ENCODE measurements at regions of chr6 and their contacts with region 1.

Region 1: DNA sequence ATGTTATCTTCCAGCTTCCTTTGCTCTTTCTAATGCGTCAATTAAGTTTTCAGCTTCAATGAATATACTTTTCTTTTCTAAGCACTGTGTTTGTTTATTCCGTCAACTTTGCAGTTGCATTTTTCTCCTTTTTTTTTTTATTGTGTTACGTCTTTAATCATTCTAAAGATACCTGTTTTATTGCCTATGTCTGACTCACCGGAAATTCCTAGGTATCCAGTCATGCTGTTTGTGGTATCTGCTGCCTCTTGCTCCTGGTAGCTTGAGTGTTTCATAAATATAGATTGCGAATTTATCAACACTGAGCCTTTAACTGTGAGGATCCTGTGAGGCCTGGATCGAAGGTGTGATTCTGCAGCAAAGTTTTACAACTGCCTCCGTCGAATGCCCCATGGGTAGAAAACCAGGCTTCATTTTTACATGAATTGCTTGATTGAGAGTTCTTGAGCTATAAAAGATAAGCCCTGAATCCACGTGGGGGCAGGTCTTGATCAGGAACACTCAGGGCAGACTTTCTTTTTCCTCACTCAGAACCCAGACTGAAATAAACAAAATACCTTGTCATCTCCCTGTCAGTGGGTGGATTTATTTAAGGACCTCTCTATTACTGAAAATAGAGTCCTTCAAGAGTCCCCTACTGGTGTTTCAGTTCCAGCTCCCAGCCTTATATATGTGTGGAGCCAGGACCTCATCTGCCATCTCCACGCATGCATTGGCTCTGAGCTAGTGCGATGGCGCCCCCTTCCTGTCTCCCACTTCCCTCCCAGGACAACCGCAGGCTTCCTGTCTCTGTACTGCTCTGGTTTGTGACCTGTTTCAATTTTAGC is 60.1 kb upstream of the LRRC1 start:
- DNase-seq: peak; percentile 83
- H3K4me3 Mint-ChIP-seq: peak overlapping the region; percentile 26
- H3K27ac Mint-ChIP-seq: no peak overlapping the region
- H3K4me1 Mint-ChIP-seq: peaks cover 34% of the 10 kb centered on the region
- H3K27me3 Mint-ChIP-seq: no peaks in the 10 kb centered on the region

Region 2: DNA sequence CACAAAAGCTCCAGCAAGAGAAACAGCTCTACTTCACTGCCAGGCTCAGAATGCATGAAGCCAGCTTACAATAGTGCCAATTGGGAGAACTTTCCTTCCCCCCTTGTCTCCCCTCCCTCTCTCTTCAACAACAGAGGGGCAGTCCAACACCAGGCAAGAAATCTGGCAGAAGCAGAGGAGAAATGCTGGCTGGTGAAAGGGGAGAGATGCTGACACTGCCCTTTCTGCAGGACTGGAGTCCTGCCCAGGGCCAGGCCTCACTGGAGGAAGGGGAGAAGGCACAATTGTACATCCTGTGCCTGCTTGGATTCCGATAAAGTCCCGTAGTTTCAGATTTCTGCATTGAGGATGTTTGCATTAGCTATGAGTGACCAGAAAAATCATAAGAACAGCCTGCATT is 208.7 kb after region 1 on chr6:
- intact Hi-C with region 1: loop called (anchors 2 kb)
- DNase-seq: no peak
- H3K4me3 Mint-ChIP-seq: no peak overlapping the region
- H3K27ac Mint-ChIP-seq: no peak overlapping the region
- H3K4me1 Mint-ChIP-seq: peaks cover 4% of the 10 kb centered on the region
- H3K27me3 Mint-ChIP-seq: peaks cover 12% of the 10 kb centered on the region

Measured in activated CD4-positive, alpha-beta T cell treated with anti-CD3 and anti-CD28 coated beads, Interleukin-2, amount 10 ng/mL, durations not matched to agents 24 days and 14 days (primary cell).